ENCODE measurements at regions of chr17 and their contacts with region 1.

Region 1: GRCh38 chr17:73506257-73507050 is 137.8 kb downstream of the SDK2 start:
- DNase-seq: no peak
- H3K4me3 ChIP-seq: no peak overlapping the region
- H3K4me3 Mint-ChIP-seq: no peak overlapping the region
- H3K27ac Mint-ChIP-seq: no peak overlapping the region
- H3K4me1 ChIP-seq: no peaks in the 10 kb centered on the region
- H3K4me1 Mint-ChIP-seq: no peaks in the 10 kb centered on the region
- H3K27me3 ChIP-seq: no peaks in the 10 kb centered on the region
- H3K27me3 Mint-ChIP-seq: peaks cover 7% of the 10 kb centered on the region
- CTCF ChIP-seq: no peak

Region 2: GRCh38 chr17:73401911-73402310 is 104.5 kb before region 1 on chr17:
- CTCF ChIA-PET with region 1: no interaction called
- POLR2A ChIA-PET with region 1: interaction called, 15 read pairs
- intact Hi-C with region 1: no loop called
- DNase-seq: no peak
- H3K4me3 ChIP-seq: no peak overlapping the region
- H3K4me3 Mint-ChIP-seq: no peak overlapping the region
- H3K27ac Mint-ChIP-seq: no peak overlapping the region
- H3K4me1 ChIP-seq: no peaks in the 10 kb centered on the region
- H3K4me1 Mint-ChIP-seq: peaks cover 4% of the 10 kb centered on the region
- H3K27me3 ChIP-seq: no peaks in the 10 kb centered on the region
- H3K27me3 Mint-ChIP-seq: no peaks in the 10 kb centered on the region
- CTCF ChIP-seq: no peak

Measured in Caco-2 (cell line).